A549 (cell line): ENCODE measurements at regions of chr17 and their contacts with region 1.

Region 1: DNA sequence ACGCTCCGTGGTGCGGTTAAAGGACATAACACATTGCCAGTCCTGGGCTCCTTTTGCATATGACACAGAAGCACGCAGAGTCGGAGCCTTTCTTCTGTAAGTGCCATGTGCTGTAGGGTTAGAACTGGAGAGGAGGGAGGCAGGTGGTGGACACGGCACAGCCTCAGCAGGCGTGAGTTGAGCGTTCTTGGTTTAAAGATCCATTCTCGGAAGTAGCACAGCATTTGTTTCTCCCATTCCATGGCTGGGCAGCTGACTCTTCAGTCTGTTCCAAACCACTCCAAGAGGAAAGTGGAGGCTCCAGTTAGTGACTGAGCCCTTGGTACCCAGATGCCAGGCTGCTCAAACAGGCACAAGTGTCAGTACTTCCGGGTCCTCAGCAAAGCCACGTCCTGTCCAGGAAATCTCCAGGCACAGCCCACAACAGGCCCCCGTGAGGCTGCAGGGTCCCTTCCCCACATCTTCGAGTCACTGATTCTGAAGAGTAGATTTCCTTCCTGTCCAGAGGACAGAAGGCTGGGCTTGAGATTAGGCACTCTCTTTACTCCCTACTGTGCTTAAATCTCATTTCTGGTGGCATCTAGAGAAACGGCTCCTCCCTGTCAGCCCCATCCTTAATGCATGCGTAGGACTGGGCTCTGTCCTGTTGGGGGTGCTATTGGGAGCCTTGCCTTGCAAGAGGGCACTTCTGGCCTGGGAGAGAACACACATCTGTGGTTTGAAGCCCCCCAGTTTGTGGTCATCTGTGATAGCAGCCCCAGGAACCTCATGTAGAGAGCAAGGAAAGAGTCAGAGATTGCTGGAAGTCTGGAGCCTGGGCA is 39.6 kb upstream of the NAT9 start:
- DNase-seq: no peak
- ATAC-seq: peak in 1 of 2 experiments; percentile 62; a peak in 3 of 6 replicates
- H3K4me3 ChIP-seq: no peak overlapping the region
- H3K27ac ChIP-seq: no peak overlapping the region
- H3K4me1 ChIP-seq: no peaks in the 10 kb centered on the region
- CTCF ChIP-seq: no peak
- EP300 ChIP-seq: no peak
- POLR2A ChIP-seq: no peak
- RAD21 ChIP-seq: no peak

Region 2: GRCh38 chr17:74798239-74798707 is 17.5 kb before region 1 on chr17:
- CTCF ChIA-PET with region 1: interaction called, 199 read pairs
- POLR2A ChIA-PET with region 1: no interaction called
- DNase-seq: no peak
- ATAC-seq: no peak
- H3K4me3 ChIP-seq: no peak overlapping the region
- H3K27ac ChIP-seq: no peak overlapping the region
- H3K4me1 ChIP-seq: no peaks in the 10 kb centered on the region
- CTCF ChIP-seq: no peak
- EP300 ChIP-seq: no peak
- POLR2A ChIP-seq: no peak
- RAD21 ChIP-seq: no peak